Pancreas (tissue), 10 donors: ENCODE measurements at regions of chr2 and their contacts with region 1.

Region 1: GRCh38 chr2:182650704-182651103 is 65.4 kb upstream of the DNAJC10 start:
- DNase-seq: no peak
- ATAC-seq: peak; percentile 31 to 76 (median 66)
- H3K4me3 ChIP-seq: no peak overlapping the region
- H3K27ac ChIP-seq: no peak overlapping the region
- H3K4me1 ChIP-seq: no peaks in the 10 kb centered on the region
- H3K27me3 ChIP-seq: no peaks in the 10 kb centered on the region
- CTCF ChIP-seq: peak in 2 of 4 donors; percentile 30 to 37

Region 2: GRCh38 chr2:181764095-181764963 is 886.4 kb before region 1 on chr2:
- intact Hi-C with region 1: no loop called
- DNase-seq: no peak
- ATAC-seq: peak in 2 of 4 donors; percentile 76 to 78
- H3K4me3 ChIP-seq: no peak overlapping the region
- H3K27ac ChIP-seq: peak overlapping the region in 2 of 4 donors; percentile 13 to 17
- H3K4me1 ChIP-seq: no peaks in the 10 kb centered on the region
- H3K27me3 ChIP-seq: no peaks in the 10 kb centered on the region
- CTCF ChIP-seq: no peak

Region 3: DNA sequence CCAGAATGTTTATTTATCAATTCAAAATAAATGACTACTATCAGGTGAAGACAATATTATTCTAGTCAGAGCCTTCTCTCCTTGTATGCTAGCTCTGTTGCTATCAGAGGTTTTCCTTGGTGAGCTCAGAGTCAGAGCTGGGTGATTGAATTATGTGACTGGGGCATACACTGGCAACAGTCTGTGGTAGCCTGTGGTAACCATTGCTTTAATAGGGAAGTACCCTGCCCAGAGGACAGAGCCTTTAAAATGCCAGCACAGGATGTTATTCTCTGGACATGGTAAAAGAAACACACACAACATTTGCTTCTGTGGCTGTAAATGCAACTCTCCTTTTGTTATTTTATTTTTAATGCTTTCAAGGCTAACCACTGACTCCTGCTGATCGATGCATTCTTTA is 540.4 kb before region 1 on chr2:
- intact Hi-C with region 1: no loop called
- DNase-seq: no peak
- ATAC-seq: no peak
- H3K4me3 ChIP-seq: no peak overlapping the region
- H3K27ac ChIP-seq: no peak overlapping the region
- H3K4me1 ChIP-seq: no peaks in the 10 kb centered on the region
- H3K27me3 ChIP-seq: no peaks in the 10 kb centered on the region
- CTCF ChIP-seq: no peak

Region 4: GRCh38 chr2:182186132-182186735 is 464.5 kb before region 1 on chr2:
- intact Hi-C with region 1: loop called in 2 of 3 experiments (anchors 5 kb)
- DNase-seq: no peak
- ATAC-seq: peak in 3 of 4 donors; percentile 68 to 79 (median 77)
- H3K4me3 ChIP-seq: no peak overlapping the region
- H3K27ac ChIP-seq: no peak overlapping the region
- H3K4me1 ChIP-seq: no peaks in the 10 kb centered on the region
- H3K27me3 ChIP-seq: no peaks in the 10 kb centered on the region
- CTCF ChIP-seq: peak; percentile 68 to 84 (median 76)

Region 5: GRCh38 chr2:182565906-182566567 is 84.7 kb before region 1 on chr2:
- intact Hi-C with region 1: no loop called
- DNase-seq: no peak
- ATAC-seq: no peak
- H3K4me3 ChIP-seq: no peak overlapping the region
- H3K27ac ChIP-seq: no peak overlapping the region
- H3K4me1 ChIP-seq: no peaks in the 10 kb centered on the region
- H3K27me3 ChIP-seq: no peaks in the 10 kb centered on the region
- CTCF ChIP-seq: no peak

Region 6: DNA sequence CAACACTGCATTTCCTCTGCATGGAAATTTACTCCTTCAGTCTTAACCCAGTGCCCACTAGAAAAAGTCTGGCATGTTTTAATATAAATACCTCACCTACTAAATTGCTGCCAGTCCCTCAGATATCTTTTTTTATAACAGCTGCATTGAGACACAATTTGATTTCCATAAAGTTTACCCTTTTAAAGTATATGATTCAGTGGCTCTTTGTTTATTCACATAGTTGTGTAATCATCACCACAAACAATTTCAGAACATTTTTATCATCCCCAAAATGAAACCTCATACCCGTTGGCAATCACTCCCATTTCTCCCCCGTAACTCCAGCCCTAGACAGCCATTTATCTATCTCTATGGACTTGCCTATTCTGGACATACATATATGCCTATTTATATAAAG is 232.7 kb after region 1 on chr2:
- intact Hi-C with region 1: no loop called
- DNase-seq: no peak
- ATAC-seq: no peak
- H3K4me3 ChIP-seq: no peak overlapping the region
- H3K27ac ChIP-seq: no peak overlapping the region
- H3K4me1 ChIP-seq: no peaks in the 10 kb centered on the region
- H3K27me3 ChIP-seq: no peaks in the 10 kb centered on the region
- CTCF ChIP-seq: no peak